ENCODE measurements at regions of chr1 and their contacts with region 1.

Region 1: GRCh38 chr1:207868774-207869721 is 41.9 kb downstream of the CD34 start:
- DNase-seq: peak; percentile 84
- H3K4me3 ChIP-seq: peak overlapping the region; percentile 85
- H3K27ac ChIP-seq: no peak overlapping the region
- H3K4me1 ChIP-seq: peaks cover 40% of the 10 kb centered on the region
- CTCF ChIP-seq: peak; percentile 69

Region 2: GRCh38 chr1:207751790-207752455 is 117.1 kb before region 1 on chr1 and contains the start of gene CD46:
- CTCF ChIA-PET with region 1: no interaction called
- POLR2A ChIA-PET with region 1: no interaction called
- intact Hi-C with region 1: loop called (anchors 5 kb)
- DNase-seq: peak; percentile 96
- H3K4me3 ChIP-seq: peak within 1 kb of the TSS; percentile 98
- H3K27ac ChIP-seq: peak within 1 kb of the TSS; percentile 100
- H3K4me1 ChIP-seq: peaks cover 74% of the 10 kb centered on the region
- CTCF ChIP-seq: no peak
- total RNA-seq, gene CD46: 74.0 and 83.8 TPM in 2 replicates

Region 3: GRCh38 chr1:207787776-207788175 is 81.3 kb before region 1 on chr1:
- CTCF ChIA-PET with region 1: no interaction called
- POLR2A ChIA-PET with region 1: no interaction called
- intact Hi-C with region 1: no loop called
- DNase-seq: no peak
- H3K4me3 ChIP-seq: no peak overlapping the region
- H3K27ac ChIP-seq: no peak overlapping the region
- H3K4me1 ChIP-seq: no peaks in the 10 kb centered on the region
- CTCF ChIP-seq: no peak

Region 4: GRCh38 chr1:207811920-207812720 is 56.9 kb before region 1 on chr1:
- CTCF ChIA-PET with region 1: interaction called, 5 read pairs
- POLR2A ChIA-PET with region 1: interaction called, 3 read pairs
- intact Hi-C with region 1: loop called (anchors 1 kb)
- DNase-seq: no peak
- H3K4me3 ChIP-seq: no peak overlapping the region
- H3K27ac ChIP-seq: no peak overlapping the region
- H3K4me1 ChIP-seq: peaks cover 13% of the 10 kb centered on the region
- CTCF ChIP-seq: peak; percentile 69

Region 5: DNA sequence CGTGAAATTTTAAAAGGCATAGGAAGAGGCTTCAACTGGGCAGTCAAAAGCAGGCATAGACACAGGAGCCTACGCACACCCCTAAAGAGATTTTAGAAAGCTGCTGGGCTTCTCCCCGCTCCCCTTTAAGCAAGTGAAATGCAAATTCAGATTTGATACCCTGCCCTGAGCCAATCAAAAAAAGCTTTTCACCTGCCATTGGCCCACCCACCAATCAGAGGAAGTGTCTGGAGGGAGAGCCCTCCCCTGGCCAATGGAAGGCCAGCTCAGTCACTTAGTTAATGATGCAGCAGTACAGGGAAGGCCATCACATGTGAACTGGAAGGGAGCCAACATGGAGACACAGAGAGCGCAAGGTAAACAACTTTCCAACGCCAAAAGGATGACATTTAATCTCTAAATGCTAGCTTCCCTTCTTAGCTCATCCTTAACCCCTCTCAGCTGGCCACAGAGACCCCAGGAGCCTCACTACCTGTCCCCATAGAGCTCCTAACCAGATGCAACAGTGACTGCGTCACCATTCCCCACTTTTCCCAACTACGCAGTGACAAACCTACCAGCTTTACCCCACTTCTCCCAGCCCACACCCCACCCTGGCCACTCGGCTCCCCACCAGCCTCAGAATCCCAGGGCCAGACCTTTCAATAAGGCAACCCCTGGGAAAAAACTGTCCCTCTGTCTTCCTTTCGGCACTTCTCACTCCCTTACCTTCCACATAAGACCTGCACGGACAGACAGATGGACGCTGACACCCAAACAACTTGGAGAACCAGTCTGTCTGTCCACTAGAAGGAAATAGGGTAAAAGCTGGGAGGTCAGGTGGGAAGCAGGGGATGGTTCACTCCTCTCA is 46.2 kb before region 1 on chr1:
- CTCF ChIA-PET with region 1: interaction called, 11 read pairs
- POLR2A ChIA-PET with region 1: interaction called, 109 read pairs
- intact Hi-C with region 1: loop called (anchors 1 kb)
- DNase-seq: peak; percentile 91
- H3K4me3 ChIP-seq: peak overlapping the region; percentile 76
- H3K27ac ChIP-seq: peak overlapping the region; percentile 45
- H3K4me1 ChIP-seq: peaks cover 66% of the 10 kb centered on the region
- CTCF ChIP-seq: no peak

Region 6: DNA sequence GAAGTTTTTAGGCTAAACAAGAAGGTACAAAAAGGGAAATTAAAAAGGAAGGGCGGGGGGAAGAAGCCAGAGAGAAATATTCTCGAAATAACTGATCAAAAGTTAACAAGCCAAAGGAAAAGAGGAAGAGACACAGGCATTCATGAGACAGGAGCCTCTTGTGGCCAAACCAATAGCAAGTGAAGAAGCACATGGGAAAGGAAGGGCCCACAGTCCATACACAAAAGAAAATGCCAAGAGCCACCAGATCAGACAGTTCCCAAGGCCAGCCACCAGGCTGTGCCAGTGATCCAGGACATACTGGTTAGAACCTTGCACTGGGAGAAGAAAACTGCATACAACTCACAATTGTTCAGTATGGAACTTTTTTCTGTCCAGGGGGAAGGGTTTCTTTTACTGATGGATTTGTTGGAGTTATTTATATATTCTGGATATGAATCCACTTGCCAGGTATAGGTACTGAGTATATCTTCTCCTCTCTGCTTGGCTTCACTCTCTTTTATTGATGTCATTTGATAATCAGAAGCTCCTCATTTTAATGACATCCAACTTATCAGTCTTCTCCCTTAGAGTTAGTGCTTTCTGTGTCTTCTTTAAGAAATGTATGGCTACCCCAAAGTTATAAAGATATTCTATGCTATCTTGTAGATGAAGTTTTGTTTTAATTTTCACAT is 40.4 kb before region 1 on chr1:
- CTCF ChIA-PET with region 1: interaction called, 3 read pairs
- POLR2A ChIA-PET with region 1: interaction called, 109 read pairs
- intact Hi-C with region 1: loop called (anchors 1 kb)
- DNase-seq: peak; percentile 68
- H3K4me3 ChIP-seq: no peak overlapping the region
- H3K27ac ChIP-seq: no peak overlapping the region
- H3K4me1 ChIP-seq: peaks cover 46% of the 10 kb centered on the region
- CTCF ChIP-seq: peak; percentile 77

Region 7: GRCh38 chr1:207885129-207886032 is 16.3 kb after region 1 on chr1:
- CTCF ChIA-PET with region 1: interaction called, 9 read pairs
- POLR2A ChIA-PET with region 1: interaction called, 29 read pairs
- intact Hi-C with region 1: no loop called
- DNase-seq: peak; percentile 76
- H3K4me3 ChIP-seq: no peak overlapping the region
- H3K27ac ChIP-seq: no peak overlapping the region
- H3K4me1 ChIP-seq: peaks cover 5% of the 10 kb centered on the region
- CTCF ChIP-seq: peak; percentile 96

Region 8: GRCh38 chr1:207963427-207964194 is 94.6 kb after region 1 on chr1:
- CTCF ChIA-PET with region 1: no interaction called
- POLR2A ChIA-PET with region 1: no interaction called
- intact Hi-C with region 1: no loop called
- DNase-seq: peak; percentile 83
- H3K4me3 ChIP-seq: peak overlapping the region; percentile 62
- H3K27ac ChIP-seq: no peak overlapping the region
- H3K4me1 ChIP-seq: peaks cover 9% of the 10 kb centered on the region
- CTCF ChIP-seq: peak; percentile 88

Measured in OCI-LY7 (cell line).